Activated CD8-positive, alpha-beta T cell treated with anti-CD3 and anti-CD28 coated beads, Interleukin-2, amount 10 ng/mL, durations not matched to agents 7 days and 5 days (primary cell): ENCODE measurements at regions of chr3 and their contacts with region 1.

Region 1: DNA sequence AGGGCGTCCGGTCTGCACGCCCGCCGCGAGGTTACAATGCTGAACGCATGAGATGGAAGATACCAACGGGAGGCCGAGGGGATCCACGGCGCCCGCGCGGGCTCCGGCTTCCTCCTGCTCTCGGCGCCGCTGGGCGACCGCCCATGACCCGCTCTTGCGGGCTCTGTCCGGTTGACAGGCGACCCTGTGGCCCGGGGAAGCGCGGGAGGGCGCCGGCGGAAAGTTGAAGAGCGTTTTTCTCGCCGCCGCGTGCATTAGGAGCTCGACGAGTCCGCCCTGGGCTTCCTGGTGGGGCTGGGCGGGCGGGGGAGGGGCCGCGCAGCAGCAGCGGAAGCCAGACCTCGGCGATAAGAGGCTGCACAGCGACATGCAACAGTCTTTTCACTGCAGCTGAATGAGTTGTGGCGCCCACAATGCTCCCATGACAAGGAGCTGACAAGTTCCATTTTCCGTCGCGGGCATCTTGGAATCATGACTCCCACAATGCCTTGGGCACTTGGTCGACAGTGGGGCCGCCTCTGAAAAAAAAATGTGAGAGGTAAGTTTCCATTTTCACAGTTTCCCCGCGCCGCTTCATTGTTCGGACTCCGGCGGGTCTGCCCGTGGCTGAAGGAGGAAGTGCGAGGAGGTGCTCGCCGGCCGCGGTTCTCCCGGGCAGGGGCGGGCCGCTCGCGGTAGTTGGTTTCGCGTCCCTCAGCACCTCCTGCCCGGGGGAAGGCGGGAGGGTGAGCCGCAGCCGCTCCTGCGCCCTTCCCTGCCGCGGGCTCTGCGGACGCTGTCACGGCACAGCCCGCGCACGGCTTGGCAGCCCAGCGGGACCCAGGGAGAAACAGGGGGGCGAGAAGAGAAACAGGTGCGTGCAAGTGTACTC is at the start of gene MBNL1:
- DNase-seq: peak; percentile 94
- ATAC-seq: peak; percentile 74
- H3K4me3 Mint-ChIP-seq: peak within 1 kb of the TSS; percentile 90
- H3K27ac Mint-ChIP-seq: peak within 1 kb of the TSS; percentile 87
- H3K4me1 Mint-ChIP-seq: peaks cover 49% of the 10 kb centered on the region
- H3K27me3 Mint-ChIP-seq: no peaks in the 10 kb centered on the region
- total RNA-seq, gene MBNL1: 469 to 504 TPM

Region 2: DNA sequence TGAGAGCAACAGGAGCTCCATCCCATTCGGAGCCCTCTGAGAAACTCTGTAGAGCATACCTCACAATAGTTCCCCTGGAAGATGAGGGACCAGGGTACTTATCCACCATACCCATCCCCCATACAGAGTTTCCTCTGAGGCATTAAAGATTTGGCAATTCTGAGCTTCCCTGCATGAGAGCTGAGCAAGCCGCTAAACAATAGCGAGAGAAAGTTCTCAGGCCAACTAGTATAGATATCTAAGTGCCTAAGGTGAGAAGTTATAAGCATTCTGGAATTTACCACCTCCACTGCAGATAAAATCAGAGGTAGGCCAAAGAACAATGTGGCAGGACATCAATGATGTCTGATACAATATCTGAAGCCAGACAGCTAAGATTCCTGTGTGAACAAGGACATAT is 129.1 kb before region 1 on chr3:
- CTCF ChIA-PET with region 1: no interaction called
- POLR2A ChIA-PET with region 1: no interaction called
- DNase-seq: no peak
- ATAC-seq: no peak
- H3K4me3 Mint-ChIP-seq: no peak overlapping the region
- H3K27ac Mint-ChIP-seq: no peak overlapping the region
- H3K4me1 Mint-ChIP-seq: no peaks in the 10 kb centered on the region
- H3K27me3 Mint-ChIP-seq: peaks cover 2% of the 10 kb centered on the region

Region 3: DNA sequence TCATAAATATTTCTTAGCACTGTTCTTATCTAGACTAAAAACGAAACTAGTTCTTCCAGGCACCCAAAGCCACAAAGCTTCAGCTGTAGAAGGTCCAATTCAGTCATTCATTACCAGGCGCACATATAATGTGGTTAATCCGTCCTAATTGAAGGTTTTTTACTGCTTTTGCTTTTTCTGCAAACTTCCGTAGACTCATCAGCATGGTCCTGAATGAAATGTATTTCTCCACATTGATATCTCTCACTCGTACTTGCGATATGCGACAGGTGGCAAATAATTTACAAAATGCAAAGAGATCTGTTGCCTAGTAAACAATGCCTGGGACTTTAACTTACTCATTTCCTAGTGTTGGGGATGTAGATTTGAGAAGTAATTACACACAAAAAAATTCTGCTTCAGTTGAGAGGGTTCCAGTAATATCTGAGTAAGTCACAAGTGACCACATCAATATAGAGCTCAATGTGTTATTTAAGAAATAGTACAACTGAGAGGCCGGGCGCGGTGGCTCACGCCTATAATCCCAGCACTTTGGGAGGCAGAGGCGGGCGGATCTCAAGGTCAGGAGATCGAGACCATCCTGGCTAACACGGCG is 75.0 kb before region 1 on chr3:
- CTCF ChIA-PET with region 1: interaction called, 7 read pairs
- POLR2A ChIA-PET with region 1: interaction called, 77 read pairs
- DNase-seq: peak; percentile 66
- ATAC-seq: peak; percentile 75
- H3K4me3 Mint-ChIP-seq: peak overlapping the region; percentile 71
- H3K27ac Mint-ChIP-seq: peak overlapping the region; percentile 83
- H3K4me1 Mint-ChIP-seq: peaks cover 82% of the 10 kb centered on the region
- H3K27me3 Mint-ChIP-seq: no peaks in the 10 kb centered on the region

Region 4: DNA sequence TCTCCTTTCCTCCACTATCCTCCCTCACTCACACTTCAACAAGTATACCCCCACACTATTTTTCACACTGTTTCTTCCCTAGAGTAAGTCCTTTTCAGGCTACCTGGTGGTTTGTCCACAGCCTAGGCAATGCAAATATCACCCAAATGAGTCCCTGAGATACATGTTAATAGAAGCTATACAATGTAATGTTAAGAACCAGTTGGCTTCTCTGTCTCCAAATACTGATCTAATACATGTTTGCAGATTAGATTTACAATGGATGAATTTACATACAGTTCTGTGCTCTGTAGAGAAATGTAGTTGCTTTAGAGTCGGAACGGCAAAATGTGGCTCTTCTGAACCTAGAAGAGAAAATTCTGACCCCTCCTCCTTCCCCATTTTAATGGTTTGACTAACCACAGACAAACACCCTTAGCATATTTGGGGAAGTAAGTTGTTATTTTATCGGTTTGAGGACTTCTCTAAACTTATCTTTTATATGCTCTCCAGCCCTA is 63.6 kb before region 1 on chr3:
- CTCF ChIA-PET with region 1: interaction called, 6 read pairs
- POLR2A ChIA-PET with region 1: interaction called, 77 read pairs
- DNase-seq: no peak
- ATAC-seq: peak; percentile 48
- H3K4me3 Mint-ChIP-seq: peak overlapping the region; percentile 75
- H3K27ac Mint-ChIP-seq: peak overlapping the region; percentile 85
- H3K4me1 Mint-ChIP-seq: peaks cover 69% of the 10 kb centered on the region
- H3K27me3 Mint-ChIP-seq: no peaks in the 10 kb centered on the region

Region 5: GRCh38 chr3:152258448-152259393 is 10.1 kb before region 1 on chr3:
- CTCF ChIA-PET with region 1: interaction called, 14 read pairs
- POLR2A ChIA-PET with region 1: interaction called, 163 read pairs
- DNase-seq: peak; percentile 76
- ATAC-seq: peak; percentile 74
- H3K4me3 Mint-ChIP-seq: peak overlapping the region; percentile 71
- H3K27ac Mint-ChIP-seq: peak overlapping the region; percentile 93
- H3K4me1 Mint-ChIP-seq: peaks cover 81% of the 10 kb centered on the region
- H3K27me3 Mint-ChIP-seq: no peaks in the 10 kb centered on the region

Region 6: GRCh38 chr3:152281133-152281713 is 12.4 kb after region 1 on chr3:
- CTCF ChIA-PET with region 1: interaction called, 4 read pairs
- POLR2A ChIA-PET with region 1: interaction called, 11 read pairs
- DNase-seq: no peak
- ATAC-seq: peak; percentile 9
- H3K4me3 Mint-ChIP-seq: peak overlapping the region; percentile 49
- H3K27ac Mint-ChIP-seq: peak overlapping the region; percentile 55
- H3K4me1 Mint-ChIP-seq: peaks cover 76% of the 10 kb centered on the region
- H3K27me3 Mint-ChIP-seq: no peaks in the 10 kb centered on the region

Region 7: DNA sequence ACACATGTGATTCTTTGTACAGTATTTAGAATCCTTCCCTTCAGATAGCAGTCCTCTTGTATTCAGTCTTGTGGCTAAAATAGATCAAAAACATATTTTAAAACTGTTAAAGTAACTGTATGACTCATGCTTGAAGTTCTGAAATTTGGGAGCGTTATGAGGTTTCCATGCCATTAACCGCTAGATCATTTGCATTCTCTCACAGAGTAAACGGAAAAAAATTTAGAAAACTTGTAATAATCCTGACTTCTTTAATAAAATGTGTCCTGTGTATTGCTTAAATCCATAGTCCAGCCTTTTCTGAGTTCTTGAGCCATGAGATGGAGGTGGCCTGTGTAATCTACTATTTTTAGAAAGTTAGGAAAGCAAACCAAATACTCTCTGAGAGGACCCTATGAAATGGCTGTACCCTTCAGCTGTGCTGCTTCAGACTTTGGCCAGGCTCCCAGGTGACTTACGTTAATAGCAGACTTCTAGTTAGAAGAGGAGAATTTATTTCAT is 33.8 kb after region 1 on chr3:
- CTCF ChIA-PET with region 1: no interaction called
- POLR2A ChIA-PET with region 1: interaction called, 10 read pairs
- DNase-seq: no peak
- ATAC-seq: peak; percentile 62
- H3K4me3 Mint-ChIP-seq: peak overlapping the region; percentile 15
- H3K27ac Mint-ChIP-seq: peak overlapping the region; percentile 18
- H3K4me1 Mint-ChIP-seq: peaks cover 78% of the 10 kb centered on the region
- H3K27me3 Mint-ChIP-seq: no peaks in the 10 kb centered on the region

Region 8: DNA sequence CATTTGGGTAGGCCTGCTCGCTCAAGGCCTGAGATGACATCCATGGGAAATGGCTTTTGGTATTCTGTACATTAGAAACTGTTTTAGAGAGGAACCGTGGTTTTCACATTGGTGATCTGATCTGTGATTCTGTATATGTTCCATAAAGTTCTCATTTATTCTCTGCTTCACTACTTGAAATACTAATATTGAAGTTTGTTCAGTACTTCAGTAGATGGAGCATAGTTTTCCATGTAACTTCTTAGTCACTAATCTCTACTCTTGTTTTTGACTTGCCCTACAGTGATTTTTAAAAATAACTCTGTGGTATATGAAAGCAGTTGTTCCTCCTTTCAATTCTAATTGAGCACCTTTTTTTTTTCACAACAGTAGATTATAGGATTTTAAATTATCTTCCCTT is 66.5 kb after region 1 on chr3:
- CTCF ChIA-PET with region 1: no interaction called
- POLR2A ChIA-PET with region 1: no interaction called
- DNase-seq: no peak
- ATAC-seq: peak; percentile 20
- H3K4me3 Mint-ChIP-seq: no peak overlapping the region
- H3K27ac Mint-ChIP-seq: no peak overlapping the region
- H3K4me1 Mint-ChIP-seq: peaks cover 69% of the 10 kb centered on the region
- H3K27me3 Mint-ChIP-seq: no peaks in the 10 kb centered on the region